ENCODE measurements at regions of chr16 and their contacts with region 1.

Region 1: DNA sequence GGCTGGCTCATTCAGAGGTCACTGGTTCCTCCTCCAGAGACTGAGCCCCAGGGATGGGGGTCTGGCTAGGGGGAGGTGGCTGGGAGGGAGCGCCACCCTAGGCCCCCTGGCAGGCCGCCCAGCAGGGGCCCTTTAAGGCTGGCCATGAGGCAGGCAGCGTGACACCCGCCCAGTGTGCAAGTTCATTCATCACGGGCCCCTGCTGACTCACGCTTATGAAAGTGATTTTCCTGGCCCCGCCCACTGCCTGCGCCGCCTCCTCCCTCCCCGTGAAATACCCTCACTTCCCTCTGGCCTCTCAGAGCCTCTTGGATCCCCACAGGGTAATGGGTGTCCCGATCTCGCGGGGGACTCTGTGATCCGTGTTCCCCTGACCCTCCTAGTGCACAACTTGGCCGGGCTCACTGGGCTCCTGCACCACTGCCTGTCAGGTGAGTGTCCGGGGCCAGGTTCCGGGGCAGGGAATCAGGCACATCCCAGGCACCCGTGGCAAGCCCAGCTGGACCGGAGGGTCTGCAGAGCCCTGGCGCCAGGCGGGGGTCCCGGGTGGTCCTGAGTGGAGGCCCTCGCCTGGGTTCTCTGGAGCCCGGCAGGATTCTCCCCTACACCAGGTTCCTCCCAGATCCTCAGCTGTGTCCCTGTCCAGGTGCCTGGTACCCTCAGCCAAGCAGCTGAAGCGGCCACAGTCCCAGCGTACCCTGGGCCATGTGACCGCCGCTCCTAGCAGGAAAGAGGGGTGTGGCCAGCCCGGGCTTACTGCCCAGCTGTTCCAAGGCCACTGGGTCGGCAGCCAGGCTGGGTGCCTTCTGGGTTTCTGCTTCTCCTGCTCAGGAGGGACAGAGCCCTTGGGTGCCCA is at the start of gene OSGIN1:
- DNase-seq: peak; percentile 95
- H3K4me3 Mint-ChIP-seq: peak within 1 kb of the TSS; percentile 62
- H3K27ac Mint-ChIP-seq: no peak within 1 kb of the TSS
- H3K4me1 Mint-ChIP-seq: peaks cover 16% of the 10 kb centered on the region
- H3K27me3 Mint-ChIP-seq: peaks cover 28% of the 10 kb centered on the region
- total RNA-seq, gene OSGIN1: 0.47 to 0.86 TPM

Region 2: GRCh38 chr16:83550183-83550569 is 403.0 kb before region 1 on chr16:
- CTCF ChIA-PET with region 1: no interaction called
- intact Hi-C with region 1: no loop called
- DNase-seq: no peak
- H3K4me3 Mint-ChIP-seq: no peak overlapping the region
- H3K27ac Mint-ChIP-seq: no peak overlapping the region
- H3K4me1 Mint-ChIP-seq: no peaks in the 10 kb centered on the region
- H3K27me3 Mint-ChIP-seq: peaks cover 4% of the 10 kb centered on the region

Region 3: DNA sequence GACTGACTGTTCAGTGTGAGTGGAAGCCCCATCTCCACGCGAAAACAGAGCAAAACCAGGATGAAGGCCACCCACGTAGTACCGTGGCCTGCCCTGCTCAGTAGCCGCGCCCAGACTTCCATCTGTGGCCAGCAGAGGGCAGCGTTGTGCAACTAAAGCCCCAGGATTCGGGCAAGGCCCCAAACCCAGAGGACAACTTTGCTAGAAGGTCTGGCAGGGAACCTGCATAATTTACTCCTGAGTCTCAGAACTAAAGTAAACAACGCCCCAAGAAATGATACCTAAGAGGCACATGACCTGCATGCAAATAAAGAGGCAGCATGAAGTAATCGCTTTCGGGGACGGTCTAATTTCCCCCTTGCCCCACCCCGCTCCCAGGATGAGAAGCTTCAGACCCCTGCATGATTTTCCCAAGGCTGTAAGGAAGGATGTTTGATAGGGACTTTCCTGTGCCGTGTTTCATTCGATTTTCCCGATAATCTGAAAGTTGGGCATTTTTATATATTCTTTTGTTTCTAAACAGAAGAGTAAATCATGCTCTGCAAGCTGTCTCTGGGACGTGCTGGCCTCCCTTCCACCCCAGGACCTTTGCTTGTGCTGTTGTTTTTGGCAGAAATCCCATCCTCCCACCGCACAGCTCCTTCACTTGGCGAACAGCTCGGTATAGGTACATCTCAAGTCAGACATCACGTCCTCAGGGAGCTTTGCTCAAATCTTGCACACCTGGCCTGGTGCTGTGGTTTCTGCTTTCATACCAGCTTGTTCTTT is 126.8 kb before region 1 on chr16:
- CTCF ChIA-PET with region 1: interaction called, 3 read pairs
- intact Hi-C with region 1: loop called (anchors 2 kb)
- DNase-seq: peak; percentile 88
- H3K4me3 Mint-ChIP-seq: no peak overlapping the region
- H3K27ac Mint-ChIP-seq: no peak overlapping the region
- H3K4me1 Mint-ChIP-seq: peaks cover 3% of the 10 kb centered on the region
- H3K27me3 Mint-ChIP-seq: no peaks in the 10 kb centered on the region

Region 4: GRCh38 chr16:83898463-83899271 is 54.5 kb before region 1 on chr16 and contains the start of gene MLYCD:
- CTCF ChIA-PET with region 1: no interaction called
- intact Hi-C with region 1: loop called (anchors 2 kb)
- DNase-seq: peak; percentile 63
- H3K4me3 Mint-ChIP-seq: peak within 1 kb of the TSS; percentile 86
- H3K27ac Mint-ChIP-seq: peak within 1 kb of the TSS; percentile 10
- H3K4me1 Mint-ChIP-seq: peaks cover 22% of the 10 kb centered on the region
- H3K27me3 Mint-ChIP-seq: no peaks in the 10 kb centered on the region
- total RNA-seq, gene MLYCD: 2.0 to 2.3 TPM

Region 5: DNA sequence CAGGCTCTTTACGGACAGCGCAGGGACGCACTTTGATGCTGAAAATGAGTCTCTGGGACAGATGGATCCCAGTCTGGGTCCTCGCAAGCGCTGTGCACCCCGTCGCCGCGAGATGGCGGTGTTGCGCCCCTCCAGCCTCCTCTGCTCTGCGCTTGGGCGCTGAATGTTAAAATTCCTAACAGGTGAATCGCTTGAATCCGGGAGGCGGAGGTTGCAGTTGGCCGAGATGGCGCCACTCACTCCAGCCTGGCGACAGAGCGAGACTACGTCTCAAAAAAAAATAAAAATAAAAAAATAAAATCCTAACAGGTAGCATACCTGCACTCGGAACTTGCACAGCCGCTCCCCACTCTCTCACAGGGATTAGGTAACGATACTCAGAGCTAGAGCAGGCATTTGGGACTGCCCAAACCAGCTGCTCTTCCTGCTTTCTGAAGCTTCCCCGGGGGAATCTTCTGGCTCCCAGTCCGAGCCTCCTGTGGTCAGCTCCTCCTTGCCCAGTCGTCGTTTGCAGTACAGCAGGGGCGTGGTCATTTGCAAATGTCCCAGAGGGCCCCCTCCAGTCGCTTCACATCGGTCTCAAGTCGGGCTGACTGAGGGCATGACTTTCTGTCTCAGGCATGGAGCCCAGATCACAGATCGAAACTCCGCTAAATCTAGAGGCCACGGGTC is 26.3 kb before region 1 on chr16:
- CTCF ChIA-PET with region 1: interaction called, 9 read pairs
- intact Hi-C with region 1: loop called (anchors 1 kb)
- DNase-seq: peak; percentile 74
- H3K4me3 Mint-ChIP-seq: no peak overlapping the region
- H3K27ac Mint-ChIP-seq: no peak overlapping the region
- H3K4me1 Mint-ChIP-seq: peaks cover 2% of the 10 kb centered on the region
- H3K27me3 Mint-ChIP-seq: no peaks in the 10 kb centered on the region

Region 6: GRCh38 chr16:84062734-84063640 is 109.8 kb after region 1 on chr16:
- CTCF ChIA-PET with region 1: interaction called, 90 read pairs
- intact Hi-C with region 1: loop called (anchors 1 kb)
- DNase-seq: peak; percentile 85
- H3K4me3 Mint-ChIP-seq: no peak overlapping the region
- H3K27ac Mint-ChIP-seq: peak overlapping the region; percentile 13
- H3K4me1 Mint-ChIP-seq: peaks cover 6% of the 10 kb centered on the region
- H3K27me3 Mint-ChIP-seq: no peaks in the 10 kb centered on the region

Region 7: DNA sequence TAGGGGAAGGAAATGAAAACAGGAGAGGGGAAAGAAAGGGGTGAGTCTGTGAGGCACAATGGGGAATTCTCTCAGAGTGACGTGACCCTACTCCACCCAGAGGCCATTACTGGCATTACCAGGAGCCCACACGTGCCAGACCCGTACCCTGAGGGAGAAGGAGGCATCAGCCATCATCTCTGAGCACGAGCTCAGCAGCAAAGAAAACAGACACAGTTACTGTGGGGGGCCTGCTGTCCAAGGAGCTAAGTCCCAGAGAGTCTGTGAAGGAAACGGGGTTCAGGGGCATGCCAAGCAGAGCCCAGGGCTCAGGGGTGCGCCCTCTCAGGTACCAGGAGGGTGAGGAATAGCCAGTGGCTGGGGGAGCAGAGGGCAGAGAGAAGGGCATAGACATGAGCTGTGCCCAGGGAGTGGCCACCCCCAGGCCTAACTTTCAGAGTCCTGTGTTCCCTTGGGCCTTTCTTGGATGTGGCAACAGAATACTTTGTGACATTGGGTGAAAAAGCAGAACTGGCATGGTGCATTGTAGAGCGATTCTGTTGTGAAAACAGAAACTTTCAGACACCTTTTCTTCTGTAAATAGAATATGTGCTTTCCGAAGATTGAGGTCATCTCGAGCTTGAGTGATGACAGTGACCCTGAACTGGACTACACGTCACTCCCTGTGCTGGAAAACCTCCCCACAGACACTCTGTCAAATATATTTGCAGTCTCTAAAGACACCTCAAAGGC is 222.3 kb after region 1 on chr16:
- CTCF ChIA-PET with region 1: interaction called, 6 read pairs
- intact Hi-C with region 1: loop called (anchors 1 kb)
- DNase-seq: peak; percentile 83
- H3K4me3 Mint-ChIP-seq: no peak overlapping the region
- H3K27ac Mint-ChIP-seq: no peak overlapping the region
- H3K4me1 Mint-ChIP-seq: peaks cover 17% of the 10 kb centered on the region
- H3K27me3 Mint-ChIP-seq: no peaks in the 10 kb centered on the region

Measured in activated naive CD4-positive, alpha-beta T cell treated with anti-CD3 and anti-CD28 coated beads for 36 hours (primary cell).